Activated CD4-positive, alpha-beta T cell treated with anti-CD3 and anti-CD28 coated beads for 36 hours (primary cell): ENCODE measurements at regions of chr7 and their contacts with region 1.

Region 1: DNA sequence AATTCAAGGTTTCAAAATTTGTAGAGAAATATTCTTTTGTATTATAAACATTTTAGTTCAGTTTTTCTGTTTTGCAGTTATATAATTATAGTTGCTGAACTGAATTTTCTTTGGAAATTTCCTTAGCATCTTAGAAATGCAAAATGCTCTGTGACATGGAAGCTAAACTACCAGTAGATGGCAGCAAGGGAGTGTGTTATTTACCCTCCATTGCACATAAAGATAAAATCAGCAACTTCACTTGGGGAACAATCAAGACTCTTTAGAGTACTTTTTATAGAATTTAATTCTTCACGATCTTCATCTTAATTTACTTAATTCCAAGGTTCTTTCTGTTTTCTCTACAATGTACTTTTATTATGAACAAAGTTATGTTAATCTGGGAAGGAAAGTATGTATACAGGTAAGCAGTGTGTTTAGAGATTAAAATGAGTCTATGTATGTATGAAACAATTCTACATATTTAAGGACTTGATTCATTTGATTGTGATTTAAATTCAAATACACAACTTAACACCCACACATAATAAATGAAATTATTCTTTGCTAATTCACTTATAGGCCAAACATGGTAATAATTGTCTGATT is 404.2 kb downstream of the THSD7A start:
- DNase-seq: no peak
- ATAC-seq: no peak
- H3K4me3 Mint-ChIP-seq: no peak overlapping the region
- H3K27ac Mint-ChIP-seq: no peak overlapping the region
- H3K4me1 Mint-ChIP-seq: no peaks in the 10 kb centered on the region
- H3K27me3 Mint-ChIP-seq: no peaks in the 10 kb centered on the region

Region 2: DNA sequence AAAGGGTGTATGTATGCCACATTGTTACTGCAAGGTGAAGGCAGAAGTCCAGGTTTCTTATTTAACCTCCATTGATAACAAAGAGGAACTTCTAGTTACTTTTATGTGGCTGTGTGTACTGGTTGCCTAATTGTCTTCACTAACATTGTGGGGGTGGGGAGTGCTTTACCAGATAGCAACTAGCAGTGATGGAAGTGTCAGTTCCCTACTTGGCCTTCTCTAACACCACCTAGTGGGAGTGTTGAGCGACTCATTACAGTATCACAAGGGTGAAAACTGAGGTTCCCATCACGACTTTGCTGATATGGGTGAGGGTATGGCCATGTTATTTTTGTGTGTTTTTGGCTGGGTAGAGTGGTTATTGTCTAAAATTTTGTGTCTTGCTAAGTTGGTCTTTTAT is 129.8 kb after region 1 on chr7:
- CTCF ChIA-PET with region 1: no interaction called
- POLR2A ChIA-PET with region 1: no interaction called
- intact Hi-C with region 1: loop called in 1 of 2 experiments (anchors 5 kb)
- DNase-seq: no peak
- ATAC-seq: peak; percentile 42
- H3K4me3 Mint-ChIP-seq: no peak overlapping the region
- H3K27ac Mint-ChIP-seq: no peak overlapping the region
- H3K4me1 Mint-ChIP-seq: no peaks in the 10 kb centered on the region
- H3K27me3 Mint-ChIP-seq: no peaks in the 10 kb centered on the region

Region 3: DNA sequence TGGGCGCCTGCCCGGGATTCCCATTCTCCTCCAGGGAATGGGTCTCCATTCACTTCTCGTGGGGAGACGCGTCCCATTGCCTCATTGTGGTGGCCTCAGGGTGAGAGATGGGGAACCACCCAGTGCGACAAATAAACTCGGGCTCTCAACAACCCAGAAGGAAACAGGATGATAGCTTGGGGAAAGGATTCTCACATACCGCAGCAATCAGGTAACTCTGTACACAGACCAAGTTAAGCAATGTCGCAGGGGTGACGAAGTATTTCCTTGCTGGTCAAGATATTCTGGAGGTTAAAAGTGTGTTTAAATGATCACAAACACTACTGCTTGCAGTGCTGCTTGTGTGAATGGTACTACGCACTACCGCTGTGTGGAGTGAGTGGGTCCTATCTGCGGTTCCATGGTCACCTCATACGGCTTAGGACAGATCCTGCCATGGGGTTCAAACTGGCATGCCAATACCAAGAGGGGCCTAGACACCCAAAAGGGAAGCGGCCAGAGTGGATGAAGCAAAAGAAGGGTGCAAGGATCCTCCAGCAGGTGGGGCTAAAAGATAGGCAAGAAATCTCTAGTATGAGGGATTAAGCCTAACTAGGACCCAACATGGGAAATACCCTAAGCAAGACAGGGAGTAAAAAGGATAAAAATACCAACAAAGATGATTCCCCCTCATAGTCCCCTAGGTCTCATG is 639.5 kb after region 1 on chr7:
- CTCF ChIA-PET with region 1: no interaction called
- POLR2A ChIA-PET with region 1: no interaction called
- intact Hi-C with region 1: loop called in 1 of 2 experiments (anchors 5 kb)
- DNase-seq: peak; percentile 68
- ATAC-seq: peak; percentile 27
- H3K4me3 Mint-ChIP-seq: no peak overlapping the region
- H3K27ac Mint-ChIP-seq: no peak overlapping the region
- H3K4me1 Mint-ChIP-seq: peaks cover 19% of the 10 kb centered on the region
- H3K27me3 Mint-ChIP-seq: no peaks in the 10 kb centered on the region